Left ventricle myocardium inferior (tissue), 1 donor: ENCODE measurements at regions of chr4 and their contacts with region 1.

Region 1: DNA sequence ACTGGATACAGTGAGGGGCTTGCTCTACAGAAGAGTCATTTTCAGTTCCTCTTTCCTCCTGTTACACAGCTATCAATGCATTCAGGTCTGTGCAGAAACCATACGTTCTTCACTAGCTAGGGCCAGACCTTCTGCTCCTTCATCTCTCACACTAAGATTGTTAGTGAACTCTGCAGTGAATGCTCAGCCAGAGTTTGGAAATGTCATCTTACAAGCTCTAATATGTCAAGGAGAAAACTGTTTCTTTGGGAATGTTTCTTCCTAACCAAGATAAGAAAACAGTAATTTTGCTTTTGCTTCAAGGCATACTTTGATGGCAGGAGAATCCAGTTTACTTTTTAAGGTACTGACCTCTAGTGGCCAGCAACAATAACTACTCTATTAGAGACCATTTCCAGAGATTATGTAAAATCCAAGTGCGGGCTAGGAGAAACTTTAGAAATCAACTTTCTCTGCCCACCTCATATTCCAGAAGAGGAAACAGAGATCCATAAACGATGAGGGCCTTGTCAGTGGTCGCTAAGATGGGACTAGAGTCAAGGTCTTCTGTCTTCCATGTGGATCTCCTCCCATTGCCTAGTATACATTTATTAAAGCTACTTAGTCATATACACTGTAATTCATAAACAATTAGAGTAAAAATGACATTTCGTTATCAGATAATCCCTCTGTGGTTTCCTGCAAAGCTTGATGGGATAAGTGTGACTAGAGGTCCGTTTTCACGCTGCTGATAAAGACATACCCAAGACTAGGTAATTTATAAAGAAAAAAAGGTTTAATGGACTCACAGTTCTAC is 12.1 kb upstream of the CC2D2A start:
- DNase-seq: no peak
- H3K4me3 ChIP-seq: no peak overlapping the region
- H3K27ac ChIP-seq: peak overlapping the region; percentile 20
- H3K4me1 ChIP-seq: peaks cover 19% of the 10 kb centered on the region
- H3K27me3 ChIP-seq: no peaks in the 10 kb centered on the region
- CTCF ChIP-seq: peak; percentile 80

Region 2: DNA sequence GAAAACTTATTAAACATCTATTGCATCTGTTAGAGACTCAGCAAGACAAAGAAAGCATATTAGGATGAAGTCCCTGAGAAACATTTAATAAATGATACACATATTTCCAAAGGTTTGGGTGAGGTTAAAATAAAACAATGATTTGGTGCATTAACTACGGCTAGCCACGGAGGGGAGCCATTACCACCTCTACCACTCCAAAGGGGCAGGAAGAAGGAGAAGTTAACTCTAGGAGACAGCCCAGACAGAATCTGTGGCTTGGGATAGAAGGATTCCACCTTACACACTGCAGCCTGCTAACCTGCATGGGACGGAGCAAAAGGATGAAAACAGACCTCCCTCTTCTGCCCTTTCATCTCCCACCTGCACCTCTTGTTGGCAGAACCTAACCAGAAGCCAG is 218.9 kb before region 1 on chr4:
- intact Hi-C with region 1: loop called (anchors 5 kb)
- DNase-seq: no peak
- H3K4me3 ChIP-seq: no peak overlapping the region
- H3K27ac ChIP-seq: peak overlapping the region; percentile 37
- H3K4me1 ChIP-seq: peaks cover 20% of the 10 kb centered on the region
- H3K27me3 ChIP-seq: no peaks in the 10 kb centered on the region
- CTCF ChIP-seq: peak; percentile 66

Region 3: DNA sequence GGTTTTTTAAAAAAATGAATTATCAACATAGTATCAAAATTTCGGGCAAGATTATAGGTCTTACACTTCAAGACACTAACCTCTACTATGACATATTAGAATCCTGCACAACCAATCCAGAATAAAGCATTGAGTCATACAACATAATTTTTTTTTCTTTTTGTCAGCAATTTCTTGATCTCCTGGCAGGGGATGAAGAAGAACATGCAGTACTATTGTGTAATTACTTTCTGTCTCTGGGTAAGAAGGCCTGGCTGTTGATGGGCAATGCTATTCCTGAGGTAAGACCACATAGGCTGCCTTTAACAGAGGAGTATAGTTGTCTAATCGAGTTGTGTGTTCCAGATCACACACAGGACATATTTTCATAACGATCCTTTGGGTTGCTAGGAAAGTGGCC is 130.0 kb after region 1 on chr4:
- intact Hi-C with region 1: no loop called
- DNase-seq: no peak
- H3K4me3 ChIP-seq: no peak overlapping the region
- H3K27ac ChIP-seq: no peak overlapping the region
- H3K4me1 ChIP-seq: peaks cover 13% of the 10 kb centered on the region
- H3K27me3 ChIP-seq: no peaks in the 10 kb centered on the region
- CTCF ChIP-seq: no peak